ENCODE measurements at regions of chr4 and their contacts with region 1.

Region 1: DNA sequence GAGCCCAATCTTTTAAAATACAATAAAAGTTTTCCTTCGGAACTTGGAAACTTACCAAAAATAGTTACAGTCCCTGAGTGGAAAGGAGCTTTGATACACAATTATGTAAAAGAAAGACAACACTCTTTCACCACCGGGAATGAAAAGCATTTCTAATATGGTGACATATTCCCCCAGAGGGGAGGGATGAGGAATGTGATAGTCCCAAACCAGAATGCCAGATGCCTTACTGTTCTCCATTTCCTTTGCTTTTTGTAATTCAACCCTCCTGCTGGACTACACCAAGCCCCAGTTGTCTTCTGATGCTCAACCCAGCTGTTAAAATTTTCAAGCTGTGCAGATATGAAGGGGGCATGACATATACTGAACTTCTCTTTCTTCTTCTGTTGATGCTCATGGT is 4.1 kb downstream of the PRIMPOL start:
- DNase-seq: no peak
- H3K4me3 ChIP-seq: no peak overlapping the region
- H3K27ac ChIP-seq: no peak overlapping the region
- H3K4me1 ChIP-seq: peaks cover 0 to 9% (median 3%) of the 10 kb centered on the region in 4 experiments; a peak in 5 of 7 replicates
- H3K27me3 ChIP-seq: no peaks in the 10 kb centered on the region
- CTCF ChIP-seq: no peak
- EP300 ChIP-seq: no peak
- POLR2A ChIP-seq: no peak
- RAD21 ChIP-seq: no peak

Region 2: GRCh38 chr4:184417802-184418511 is 235.7 kb before region 1 on chr4:
- CTCF ChIA-PET with region 1: no interaction called
- POLR2A ChIA-PET with region 1: no interaction called
- DNase-seq: no peak
- H3K4me3 ChIP-seq: no peak overlapping the region
- H3K27ac ChIP-seq: no peak overlapping the region
- H3K4me1 ChIP-seq: peaks cover 0 to 2% (median 0%) of the 10 kb centered on the region in 4 experiments; a peak in 1 of 7 replicates
- H3K27me3 ChIP-seq: no peaks in the 10 kb centered on the region
- CTCF ChIP-seq: no peak
- EP300 ChIP-seq: no peak
- POLR2A ChIP-seq: no peak
- RAD21 ChIP-seq: no peak

Region 3: GRCh38 chr4:184664448-184665210 is 11.0 kb after region 1 on chr4:
- CTCF ChIA-PET with region 1: interaction called, 10 read pairs
- POLR2A ChIA-PET with region 1: interaction called, 6 read pairs
- DNase-seq: no peak
- H3K4me3 ChIP-seq: no peak overlapping the region
- H3K27ac ChIP-seq: no peak overlapping the region
- H3K4me1 ChIP-seq: no peaks in the 10 kb centered on the region
- H3K27me3 ChIP-seq: no peaks in the 10 kb centered on the region
- CTCF ChIP-seq: no peak
- EP300 ChIP-seq: no peak
- POLR2A ChIP-seq: no peak
- RAD21 ChIP-seq: no peak

Region 4: GRCh38 chr4:184748251-184748652 is 94.6 kb after region 1 on chr4:
- CTCF ChIA-PET with region 1: no interaction called
- POLR2A ChIA-PET with region 1: no interaction called
- DNase-seq: no peak
- H3K4me3 ChIP-seq: no peak overlapping the region
- H3K27ac ChIP-seq: no peak overlapping the region
- H3K4me1 ChIP-seq: peaks cover 9 to 21% (median 13%) of the 10 kb centered on the region in 4 experiments
- H3K27me3 ChIP-seq: peaks cover 0 to 1% (median 0%) of the 10 kb centered on the region in 4 experiments; a peak in 3 of 7 replicates
- CTCF ChIP-seq: no peak
- EP300 ChIP-seq: no peak
- POLR2A ChIP-seq: no peak
- RAD21 ChIP-seq: no peak

Region 5: GRCh38 chr4:184913356-184914143 is 259.9 kb after region 1 on chr4:
- CTCF ChIA-PET with region 1: no interaction called
- POLR2A ChIA-PET with region 1: no interaction called
- DNase-seq: no peak
- H3K4me3 ChIP-seq: no peak overlapping the region
- H3K27ac ChIP-seq: no peak overlapping the region
- H3K4me1 ChIP-seq: no peaks in the 10 kb centered on the region
- H3K27me3 ChIP-seq: no peaks in the 10 kb centered on the region
- CTCF ChIP-seq: no peak
- EP300 ChIP-seq: no peak
- POLR2A ChIP-seq: no peak
- RAD21 ChIP-seq: no peak

Measured in H1 (cell line).